ENCODE measurements at regions of chr4 and their contacts with region 1.

Region 1: GRCh38 chr4:113584407-113585150 is 177.0 kb downstream of the CAMK2D start:
- DNase-seq: no peak
- CTCF ChIP-seq: no peak

Region 2: DNA sequence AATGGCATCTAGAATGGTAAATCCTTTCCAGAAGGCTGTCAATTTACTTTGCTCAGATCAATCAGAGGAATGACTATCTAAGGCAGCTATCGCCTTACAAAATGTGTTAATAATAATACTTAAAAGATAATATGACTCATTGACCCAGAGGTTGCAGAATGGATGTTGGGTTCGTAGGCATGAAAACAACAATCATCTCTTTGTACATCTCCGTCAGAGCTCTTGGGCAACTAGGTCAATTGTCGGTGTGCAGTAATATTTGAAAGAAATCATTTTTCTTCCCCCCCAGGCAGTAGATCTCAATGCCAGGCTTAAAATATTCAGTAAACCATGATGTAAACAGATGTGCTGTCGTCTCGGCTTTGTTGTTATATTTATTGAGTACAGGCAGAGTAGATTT is 11.8 kb after region 1 on chr4:
- CTCF ChIA-PET with region 1: interaction called, 28 read pairs
- POLR2A ChIA-PET with region 1: no interaction called
- DNase-seq: no peak
- CTCF ChIP-seq: no peak

Region 3: DNA sequence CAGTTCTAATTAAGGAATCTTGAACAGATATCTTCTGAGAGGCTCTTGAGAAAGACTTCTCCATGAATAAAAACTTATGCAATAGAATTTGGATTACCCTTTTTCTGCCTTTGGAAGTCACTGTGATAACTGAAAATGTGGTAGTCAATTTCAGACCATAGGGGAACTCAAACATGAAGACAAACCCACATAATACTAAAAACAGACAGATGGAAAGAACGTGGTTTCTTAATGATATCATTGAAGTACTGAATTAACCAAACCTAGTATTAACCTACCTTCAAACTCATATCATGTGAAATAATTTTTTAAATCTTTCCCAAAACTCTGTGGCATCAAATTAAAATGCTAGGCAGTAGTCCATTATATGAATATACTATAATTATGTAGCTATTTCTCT is 23.4 kb after region 1 on chr4:
- CTCF ChIA-PET with region 1: no interaction called
- POLR2A ChIA-PET with region 1: no interaction called
- DNase-seq: peak; percentile 33
- CTCF ChIP-seq: no peak

Measured in GM10248 (cell line).